ENCODE measurements at regions of chr1 and their contacts with region 1.

Region 1: DNA sequence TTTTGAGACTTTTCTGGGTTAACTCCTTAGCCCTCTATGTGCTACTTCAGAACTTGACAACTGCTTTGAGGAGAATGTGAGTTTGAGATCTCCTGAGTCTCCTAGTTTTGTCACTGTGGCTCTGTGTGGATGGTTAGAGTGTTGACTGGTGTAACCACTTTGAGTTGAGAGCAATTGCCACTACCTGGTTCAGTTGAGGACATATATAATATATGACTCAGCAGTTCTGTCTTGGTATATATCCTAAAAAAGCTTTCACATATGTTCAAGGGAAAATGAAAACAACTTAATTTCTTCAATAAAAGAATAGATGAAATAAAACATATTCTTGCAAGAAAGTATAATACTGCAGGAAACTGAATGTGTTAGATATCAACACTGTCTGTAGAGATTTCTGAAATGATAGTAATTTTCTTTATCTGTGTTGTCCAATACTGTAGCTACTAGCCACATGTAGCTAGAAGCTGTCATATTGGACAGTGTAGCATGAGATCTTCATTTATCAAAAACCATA is 96.7 kb upstream of the QSOX1 start:
- DNase-seq: no peak
- ATAC-seq: no peak
- H3K4me3 ChIP-seq: no peak overlapping the region
- H3K27ac ChIP-seq: no peak overlapping the region
- H3K4me1 ChIP-seq: no peaks in the 10 kb centered on the region
- H3K27me3 ChIP-seq: no peaks in the 10 kb centered on the region
- CTCF ChIP-seq: no peak

Region 2: DNA sequence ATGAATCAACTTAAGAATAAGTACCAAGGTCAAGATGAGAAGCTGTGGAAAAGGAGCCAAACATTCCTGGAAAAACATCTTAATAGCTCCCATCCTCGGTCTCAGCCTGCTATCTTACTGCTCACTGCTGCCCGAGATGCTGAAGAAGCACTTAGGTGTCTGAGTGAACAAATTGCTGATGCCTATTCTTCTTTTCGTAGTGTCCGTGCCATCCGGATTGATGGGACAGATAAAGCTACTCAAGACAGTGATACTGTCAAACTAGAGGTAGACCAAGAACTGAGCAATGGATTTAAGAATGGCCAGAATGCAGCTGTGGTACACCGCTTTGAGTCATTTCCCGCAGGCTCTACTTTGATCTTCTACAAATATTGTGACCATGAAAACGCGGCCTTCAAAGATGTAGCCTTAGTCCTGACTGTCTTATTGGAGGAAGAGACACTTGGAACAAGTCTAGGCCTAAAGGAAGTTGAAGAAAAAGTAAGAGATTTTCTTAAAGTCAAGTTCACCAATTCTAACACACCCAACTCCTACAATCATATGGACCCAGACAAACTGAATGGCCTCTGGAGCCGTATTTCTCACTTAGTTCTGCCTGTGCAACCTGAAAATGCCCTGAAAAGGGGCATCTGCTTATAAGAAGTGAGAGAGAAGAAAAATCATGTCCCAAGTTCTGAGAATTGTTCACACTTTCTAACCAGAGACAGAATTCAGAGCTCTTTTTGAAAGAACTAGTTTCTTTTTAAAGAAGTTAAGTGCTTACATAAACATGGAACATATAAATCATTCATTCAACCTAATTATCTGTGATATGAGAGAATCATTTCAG is 140.1 kb before region 1 on chr1:
- intact Hi-C with region 1: loop called in 2 of 10 experiments (anchors 10 kb)
- DNase-seq: no peak
- ATAC-seq: no peak
- H3K4me3 ChIP-seq: no peak overlapping the region
- H3K27ac ChIP-seq: no peak overlapping the region
- H3K4me1 ChIP-seq: peaks cover 0 to 9% (median 4%) of the 10 kb centered on the region in 9 donors
- H3K27me3 ChIP-seq: no peaks in the 10 kb centered on the region
- CTCF ChIP-seq: no peak

Measured in heart right ventricle (tissue), 16 donors.